ENCODE measurements at regions of chr6 and their contacts with region 1.

Region 1: GRCh38 chr6:14095437-14095836 is 22.1 kb upstream of the CD83 start:
- DNase-seq: no peak
- ATAC-seq: peak; percentile 79
- H3K4me3 ChIP-seq: no peak overlapping the region
- H3K27ac ChIP-seq: peak overlapping the region; percentile 80; the same call in 1 of the 2 replicates
- H3K4me1 ChIP-seq: peaks cover 56% of the 10 kb centered on the region
- H3K27me3 ChIP-seq: no peaks in the 10 kb centered on the region
- CTCF ChIP-seq: no peak
- EP300 ChIP-seq: peak; percentile 87 to 91; a peak in 3 of 4 replicates
- POLR2A ChIP-seq: no peak
- RAD21 ChIP-seq: no peak

Region 2: DNA sequence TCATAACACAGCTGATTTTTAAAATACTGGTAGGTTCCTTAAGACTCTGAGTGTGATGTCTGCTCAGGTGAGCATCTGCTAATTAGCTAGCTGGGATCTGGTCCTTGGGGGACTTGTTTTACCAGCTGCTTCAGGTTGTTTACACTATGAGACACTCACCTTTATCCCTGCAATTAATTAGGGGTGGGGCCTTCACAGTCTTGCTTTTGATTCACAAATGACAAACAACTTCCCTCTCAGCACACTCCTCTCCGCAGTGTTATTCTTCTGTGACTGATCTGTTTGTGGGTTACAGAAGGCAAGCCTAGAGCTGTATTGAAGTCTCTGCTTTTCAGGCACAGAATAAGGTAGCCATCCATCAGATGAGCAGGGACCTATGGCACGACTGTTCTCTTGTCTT is 39.9 kb before region 1 on chr6:
- CTCF ChIA-PET with region 1: no interaction called
- POLR2A ChIA-PET with region 1: no interaction called
- RAD21 ChIA-PET with region 1: no interaction called
- SMC1A ChIA-PET with region 1: no interaction called
- in situ Hi-C with region 1: no loop called
- intact Hi-C with region 1: no loop called
- DNase-seq: no peak
- ATAC-seq: no peak
- H3K4me3 ChIP-seq: no peak overlapping the region
- H3K27ac ChIP-seq: no peak overlapping the region
- H3K4me1 ChIP-seq: no peaks in the 10 kb centered on the region
- H3K27me3 ChIP-seq: peaks cover 5 to 7% of the 10 kb centered on the region in 2 experiments; a peak in 3 of 4 replicates
- CTCF ChIP-seq: no peak
- EP300 ChIP-seq: no peak
- POLR2A ChIP-seq: no peak
- RAD21 ChIP-seq: no peak

Region 3: DNA sequence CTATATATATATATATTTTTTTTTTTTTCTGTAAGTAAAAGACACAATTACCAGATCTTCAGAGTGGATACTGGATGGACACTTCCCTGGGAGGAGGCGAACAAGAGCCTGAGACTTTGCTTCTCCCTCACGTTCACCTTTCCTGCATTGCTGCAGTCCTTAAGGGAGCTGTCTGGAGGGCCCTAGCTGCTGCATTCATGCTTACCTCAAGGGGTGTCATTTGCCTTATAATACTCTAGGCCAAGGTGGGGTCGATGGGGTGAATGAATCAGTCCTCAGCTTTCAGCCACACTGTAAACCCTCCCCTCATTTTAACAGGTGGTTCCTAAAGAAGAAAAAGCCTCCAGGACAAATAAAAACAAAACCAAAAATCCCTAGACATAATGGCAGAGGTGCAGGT is 12.7 kb before region 1 on chr6:
- CTCF ChIA-PET with region 1: interaction called, 6 read pairs
- POLR2A ChIA-PET with region 1: interaction called, 9 read pairs
- RAD21 ChIA-PET with region 1: interaction called, 6 read pairs
- SMC1A ChIA-PET with region 1: interaction called, 226 read pairs
- in situ Hi-C with region 1: no loop called
- intact Hi-C with region 1: no loop called
- DNase-seq: no peak
- ATAC-seq: no peak
- H3K4me3 ChIP-seq: no peak overlapping the region
- H3K27ac ChIP-seq: no peak overlapping the region
- H3K4me1 ChIP-seq: peaks cover 12% of the 10 kb centered on the region
- H3K27me3 ChIP-seq: no peaks in the 10 kb centered on the region
- CTCF ChIP-seq: no peak
- EP300 ChIP-seq: no peak
- POLR2A ChIP-seq: no peak
- RAD21 ChIP-seq: no peak

Region 4: DNA sequence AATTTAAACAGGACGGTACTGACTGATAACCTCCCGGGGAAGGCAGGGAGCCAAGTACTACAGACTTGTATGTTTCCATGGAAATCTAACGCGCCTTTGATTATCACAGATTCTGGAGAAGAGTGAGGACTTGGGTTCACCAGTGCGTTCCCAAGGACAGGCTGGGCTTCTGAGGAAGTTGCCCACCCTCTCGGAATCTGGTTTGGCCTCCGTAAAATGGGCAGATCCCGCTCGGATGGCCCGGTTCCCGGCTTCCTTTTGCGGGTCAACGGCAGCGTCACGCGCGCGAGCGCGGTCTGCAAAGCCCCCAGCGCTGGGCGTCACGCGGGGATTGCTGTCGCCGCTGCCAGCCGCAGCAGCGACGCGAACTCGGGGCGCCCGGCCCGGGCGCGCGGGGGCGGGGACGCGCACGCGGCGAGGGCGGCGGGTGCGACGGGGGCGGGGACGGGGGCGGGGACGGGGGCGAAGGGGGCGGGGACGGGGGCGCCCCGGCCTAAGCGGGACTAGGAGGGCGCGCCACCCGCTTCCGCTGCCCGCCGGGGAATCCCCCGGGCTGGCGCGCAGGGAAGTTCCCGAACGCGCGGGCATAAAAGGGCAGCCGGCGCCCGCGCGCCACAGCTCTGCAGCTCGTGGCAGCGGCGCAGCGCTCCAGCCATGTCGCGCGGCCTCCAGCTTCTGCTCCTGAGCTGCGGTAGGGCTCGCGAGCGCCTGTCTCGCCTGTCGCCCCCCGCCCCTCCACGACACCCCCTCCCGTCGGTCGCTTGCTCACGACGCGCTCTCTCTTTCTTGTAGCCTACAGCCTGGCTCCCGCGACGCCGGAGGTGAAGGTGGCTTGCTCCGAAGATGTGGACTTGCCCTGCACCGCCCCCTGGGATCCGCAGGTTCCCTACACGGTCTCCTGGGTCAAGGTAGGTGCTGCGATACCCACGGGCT is 22.0 kb after region 1 on chr6 and contains the start of gene CD83:
- CTCF ChIA-PET with region 1: interaction called, 54 read pairs
- POLR2A ChIA-PET with region 1: interaction called, 45 read pairs
- RAD21 ChIA-PET with region 1: interaction called, 164 read pairs
- SMC1A ChIA-PET with region 1: interaction called, 187 read pairs
- in situ Hi-C with region 1: no loop called
- intact Hi-C with region 1: no loop called
- DNase-seq: no peak
- ATAC-seq: peak; percentile 68
- H3K4me3 ChIP-seq: peak within 1 kb of the TSS; percentile 93
- H3K27ac ChIP-seq: peak within 1 kb of the TSS; percentile 78
- H3K4me1 ChIP-seq: peaks cover 14% of the 10 kb centered on the region
- H3K27me3 ChIP-seq: no peaks in the 10 kb centered on the region
- CTCF ChIP-seq: peak in 2 of 3 experiments; percentile 11 to 34; a peak in 2 of 6 replicates
- EP300 ChIP-seq: peak in 1 of 2 experiments; percentile 42; a peak in 1 of 4 replicates
- POLR2A ChIP-seq: peak; percentile 100
- RAD21 ChIP-seq: peak; percentile 35
- polyA plus RNA-seq, gene CD83: 120 to 174 TPM

Measured in GM12878 (cell line).